Activated CD4-positive, alpha-beta T cell treated with anti-CD3 and anti-CD28 coated beads for 36 hours (primary cell): ENCODE measurements at regions of chr7 and their contacts with region 1.

Region 1: DNA sequence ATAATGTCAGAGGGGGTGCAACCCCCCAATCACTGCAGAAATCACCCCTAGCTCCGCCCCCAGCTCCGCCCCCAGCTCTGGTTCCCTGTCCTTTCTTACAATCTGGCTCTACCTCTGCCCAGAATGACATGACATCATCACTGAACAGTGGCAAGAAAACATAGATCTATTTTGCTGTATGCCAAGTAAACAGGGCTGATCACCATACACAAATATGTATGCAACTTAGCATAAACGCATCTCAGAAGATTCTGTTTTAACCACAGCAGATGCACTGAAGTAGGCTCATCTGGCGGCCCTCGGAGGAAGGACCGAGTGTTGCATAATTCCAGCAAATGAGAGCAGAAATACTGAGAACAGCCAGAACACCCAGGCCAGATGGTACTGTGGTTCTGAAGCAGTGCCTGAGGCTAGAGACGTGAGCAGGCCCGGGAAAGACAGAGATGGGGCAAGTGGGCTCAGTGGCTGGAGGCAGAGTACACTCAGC is 293.3 kb upstream of the KLF14 start:
- DNase-seq: peak; percentile 70
- ATAC-seq: peak; percentile 27
- H3K4me3 Mint-ChIP-seq: peak overlapping the region; percentile 25
- H3K27ac Mint-ChIP-seq: peak overlapping the region; percentile 85
- H3K4me1 Mint-ChIP-seq: peaks cover 85% of the 10 kb centered on the region
- H3K27me3 Mint-ChIP-seq: no peaks in the 10 kb centered on the region

Region 2: GRCh38 chr7:130838738-130839137 is 188.6 kb before region 1 on chr7:
- CTCF ChIA-PET with region 1: interaction called, 3 read pairs
- POLR2A ChIA-PET with region 1: no interaction called
- intact Hi-C with region 1: loop called in 1 of 2 experiments (anchors 5 kb)
- DNase-seq: peak; percentile 37
- ATAC-seq: peak; percentile 91
- H3K4me3 Mint-ChIP-seq: no peak overlapping the region
- H3K27ac Mint-ChIP-seq: peak overlapping the region; percentile 10
- H3K4me1 Mint-ChIP-seq: peaks cover 17% of the 10 kb centered on the region
- H3K27me3 Mint-ChIP-seq: peaks cover 30% of the 10 kb centered on the region

Region 3: DNA sequence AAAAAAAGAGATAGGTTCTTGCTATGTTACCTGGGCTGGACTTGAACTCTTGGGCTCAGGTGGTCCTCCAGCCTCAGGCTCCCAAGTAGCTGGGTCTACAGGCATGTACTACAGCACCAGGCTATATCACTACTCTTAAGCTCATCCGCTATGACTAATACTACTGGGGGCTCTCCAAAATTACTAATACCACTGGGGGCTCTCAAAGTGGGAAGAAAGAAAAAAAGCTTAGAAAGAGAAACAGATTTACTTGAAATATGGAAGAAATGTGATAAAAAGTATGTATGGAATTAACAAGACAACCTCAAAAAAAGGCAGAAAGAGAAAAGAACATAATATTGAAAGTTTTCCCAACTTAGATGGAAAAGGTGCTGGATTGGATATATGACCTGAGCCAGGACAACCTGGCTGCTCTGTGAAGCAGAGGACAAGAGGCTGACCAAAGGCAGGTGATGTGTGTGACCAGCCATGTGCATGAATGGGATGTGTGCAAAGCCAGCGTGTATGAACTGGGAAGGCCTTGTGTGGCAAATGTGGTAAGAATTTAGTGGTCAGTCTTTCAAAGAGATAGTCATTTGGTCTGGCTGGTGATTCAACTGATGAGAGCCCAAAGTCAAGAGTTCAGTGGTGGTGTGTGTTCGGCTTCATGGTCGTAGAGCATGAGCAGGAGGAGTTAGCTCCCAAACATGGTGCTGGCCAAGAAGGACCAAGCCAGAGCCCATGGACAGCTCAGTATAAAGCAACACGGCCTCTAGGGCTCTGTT is 60.9 kb before region 1 on chr7:
- CTCF ChIA-PET with region 1: interaction called, 5 read pairs
- POLR2A ChIA-PET with region 1: interaction called, 4 read pairs
- intact Hi-C with region 1: loop called (anchors 1 kb)
- DNase-seq: peak; percentile 39
- ATAC-seq: peak; percentile 3
- H3K4me3 Mint-ChIP-seq: peak overlapping the region; percentile 11
- H3K27ac Mint-ChIP-seq: peak overlapping the region; percentile 87
- H3K4me1 Mint-ChIP-seq: peaks cover 73% of the 10 kb centered on the region
- H3K27me3 Mint-ChIP-seq: no peaks in the 10 kb centered on the region

Region 4: DNA sequence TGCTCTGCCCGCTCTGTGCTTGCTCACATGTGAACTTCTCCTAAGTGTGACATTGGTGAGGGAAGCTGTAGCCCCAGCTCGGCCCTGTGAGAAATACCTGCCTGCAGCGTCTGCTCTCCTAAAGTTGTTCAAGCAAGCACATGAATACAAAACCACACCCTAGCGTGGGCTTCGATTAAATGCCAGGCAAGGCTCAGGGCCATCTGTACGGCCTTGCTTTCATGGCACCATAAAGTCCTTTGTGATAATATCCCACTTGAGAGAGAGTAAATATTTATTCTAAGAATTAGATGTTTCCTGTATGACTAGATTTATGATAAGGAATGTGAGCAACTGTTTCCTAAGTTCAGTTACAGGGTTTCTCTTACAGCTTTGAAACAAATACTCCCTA is 30.5 kb before region 1 on chr7:
- CTCF ChIA-PET with region 1: interaction called, 3 read pairs
- POLR2A ChIA-PET with region 1: no interaction called
- intact Hi-C with region 1: loop called in 1 of 2 experiments (anchors 1 kb)
- DNase-seq: peak; percentile 67
- ATAC-seq: peak; percentile 66
- H3K4me3 Mint-ChIP-seq: peak overlapping the region; percentile 64
- H3K27ac Mint-ChIP-seq: peak overlapping the region; percentile 92
- H3K4me1 Mint-ChIP-seq: peaks cover 86% of the 10 kb centered on the region
- H3K27me3 Mint-ChIP-seq: no peaks in the 10 kb centered on the region

Region 5: GRCh38 chr7:131355921-131356777 is 328.8 kb after region 1 on chr7:
- CTCF ChIA-PET with region 1: no interaction called
- POLR2A ChIA-PET with region 1: no interaction called
- intact Hi-C with region 1: no loop called
- DNase-seq: no peak
- ATAC-seq: no peak
- H3K4me3 Mint-ChIP-seq: no peak overlapping the region
- H3K27ac Mint-ChIP-seq: no peak overlapping the region
- H3K4me1 Mint-ChIP-seq: peaks cover 67% of the 10 kb centered on the region
- H3K27me3 Mint-ChIP-seq: no peaks in the 10 kb centered on the region